ENCODE measurements at regions of chr22 and their contacts with region 1.

Region 1: DNA sequence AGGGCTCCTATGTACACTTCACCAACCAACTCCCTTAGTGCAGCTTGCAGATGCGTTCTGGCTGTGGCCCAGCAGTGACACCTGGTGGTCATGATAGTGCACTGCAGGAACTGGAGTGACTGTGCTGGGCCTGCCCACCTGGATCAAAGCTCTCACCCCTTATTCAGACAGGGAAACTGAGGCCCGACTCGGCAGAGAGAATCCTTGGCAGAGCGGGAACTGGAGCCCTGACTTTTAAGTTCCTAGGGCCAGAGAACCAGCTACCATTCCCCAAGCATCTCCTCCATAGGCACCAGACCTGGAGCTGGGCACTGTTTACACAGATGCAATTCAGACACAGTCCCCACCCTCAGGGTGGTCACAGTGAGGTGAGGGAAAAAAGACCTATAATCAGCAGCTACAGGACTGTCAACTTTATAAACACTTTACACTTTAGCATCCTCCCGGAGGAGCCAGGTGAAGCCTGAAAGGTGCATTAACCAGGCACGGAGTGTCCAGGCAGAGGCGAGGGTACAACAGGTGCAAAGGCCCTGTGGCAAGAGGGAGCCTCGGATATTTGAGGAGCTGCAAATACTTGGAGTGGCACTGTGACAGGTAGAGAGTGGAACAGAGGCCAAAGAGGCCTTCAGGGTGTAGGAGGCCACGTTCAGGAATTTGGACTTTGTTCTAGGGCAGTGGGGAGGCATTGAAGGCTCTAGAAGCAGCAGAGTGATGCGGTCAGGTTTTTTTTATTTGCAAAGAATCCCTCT is 22.0 kb downstream of the RHBDD3 start:
- DNase-seq: peak; percentile 83
- ATAC-seq: peak; percentile 95

Region 2: DNA sequence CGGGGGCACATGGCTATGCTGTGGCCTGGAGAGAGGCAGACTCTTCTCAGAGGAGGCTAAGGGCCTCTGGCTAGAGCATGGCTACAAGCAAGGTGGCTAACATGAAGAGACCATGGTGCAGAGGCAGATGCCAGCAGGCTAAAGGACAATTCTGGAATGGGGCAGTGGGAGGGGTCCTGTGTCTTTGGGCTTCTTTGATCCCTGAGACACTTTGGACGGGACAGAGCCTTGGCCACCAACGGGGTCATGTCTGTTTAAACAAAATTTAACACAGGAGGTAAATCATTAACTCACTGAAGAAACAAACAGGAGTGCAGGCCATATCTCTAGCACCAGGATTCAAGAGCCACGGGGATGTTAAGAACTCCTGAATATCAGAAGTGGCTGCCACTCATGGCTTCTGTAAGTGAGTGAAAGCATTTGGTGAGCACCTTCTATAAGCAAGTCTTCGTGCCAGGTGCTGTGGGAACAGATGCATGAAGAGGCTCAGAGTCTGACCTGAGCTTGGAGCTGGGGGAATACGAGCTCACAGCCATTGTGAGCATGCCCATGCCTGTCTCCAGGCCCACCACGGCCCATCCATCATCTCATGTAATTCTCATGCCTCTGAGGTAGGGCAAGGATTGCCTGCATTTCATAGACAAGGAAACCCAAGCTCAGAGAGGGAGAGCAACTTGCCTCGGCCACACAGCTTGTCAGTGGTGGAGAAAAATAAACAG is 380.8 kb before region 1 on chr22:
- intact Hi-C with region 1: loop called (anchors 10 kb)
- DNase-seq: no peak
- ATAC-seq: no peak

Region 3: GRCh38 chr22:28907311-28908008 is 338.4 kb before region 1 on chr22:
- intact Hi-C with region 1: no loop called
- DNase-seq: no peak
- ATAC-seq: no peak

Region 4: DNA sequence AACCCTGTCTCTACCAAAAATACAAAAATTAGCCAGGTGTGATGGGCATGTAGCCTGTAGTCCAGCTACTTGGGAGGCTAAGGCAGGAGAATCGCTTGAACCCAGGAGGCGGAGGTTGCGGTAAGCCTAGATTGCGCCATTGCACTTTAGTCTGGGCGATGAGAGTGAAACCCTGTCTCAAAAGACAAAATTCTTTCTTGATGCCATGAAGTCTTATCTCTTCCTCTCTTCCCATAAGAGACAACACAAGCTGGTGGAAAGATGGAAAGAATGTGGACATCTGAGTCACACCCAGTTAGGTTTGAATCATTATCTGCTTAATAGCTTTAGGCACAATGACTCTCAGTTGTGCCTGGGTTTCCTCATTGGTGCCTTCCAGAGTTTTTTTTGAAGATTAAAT is 137.7 kb before region 1 on chr22:
- intact Hi-C with region 1: no loop called
- DNase-seq: no peak
- ATAC-seq: no peak

Region 5: GRCh38 chr22:29275819-29276565 is 30.2 kb after region 1 on chr22:
- intact Hi-C with region 1: no loop called
- DNase-seq: no peak
- ATAC-seq: no peak

Region 6: DNA sequence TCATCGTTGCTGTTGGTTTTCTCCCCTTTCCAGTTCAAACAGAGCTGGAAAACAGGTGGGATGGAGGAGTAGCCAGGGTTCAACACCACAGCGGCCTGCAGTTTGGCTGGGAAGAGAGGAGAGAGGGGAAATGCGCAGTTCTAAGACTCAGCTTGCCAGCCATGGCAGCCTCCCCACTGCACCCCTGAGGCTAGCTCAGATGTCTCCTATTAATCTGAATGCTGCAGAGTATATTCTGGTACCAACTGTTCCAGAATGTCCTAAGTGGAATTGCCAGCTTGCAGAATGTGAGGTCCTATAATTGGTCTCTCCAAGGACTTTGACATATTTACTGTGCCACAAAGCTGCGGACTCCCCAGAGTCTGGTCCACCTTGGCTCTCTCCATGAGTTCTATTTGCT is 266.2 kb after region 1 on chr22:
- intact Hi-C with region 1: no loop called
- DNase-seq: no peak
- ATAC-seq: no peak

Measured in sciatic nerve (tissue), 2 donors.